Posterior cingulate gyrus (tissue), 11 donors: ENCODE measurements at regions of chr15 and their contacts with region 1.

Region 1: GRCh38 chr15:93997084-93997918 is 234.1 kb upstream of the MCTP2 start:
- DNase-seq: no peak

Region 2: GRCh38 chr15:94119923-94120775 is 122.8 kb after region 1 on chr15:
- intact Hi-C with region 1: loop called (anchors 2 kb)
- DNase-seq: peak in 7 of 10 donors; percentile 29 to 91 (median 59)